B cell (primary cell): ENCODE measurements at regions of chr10 and their contacts with region 1.

Region 1: DNA sequence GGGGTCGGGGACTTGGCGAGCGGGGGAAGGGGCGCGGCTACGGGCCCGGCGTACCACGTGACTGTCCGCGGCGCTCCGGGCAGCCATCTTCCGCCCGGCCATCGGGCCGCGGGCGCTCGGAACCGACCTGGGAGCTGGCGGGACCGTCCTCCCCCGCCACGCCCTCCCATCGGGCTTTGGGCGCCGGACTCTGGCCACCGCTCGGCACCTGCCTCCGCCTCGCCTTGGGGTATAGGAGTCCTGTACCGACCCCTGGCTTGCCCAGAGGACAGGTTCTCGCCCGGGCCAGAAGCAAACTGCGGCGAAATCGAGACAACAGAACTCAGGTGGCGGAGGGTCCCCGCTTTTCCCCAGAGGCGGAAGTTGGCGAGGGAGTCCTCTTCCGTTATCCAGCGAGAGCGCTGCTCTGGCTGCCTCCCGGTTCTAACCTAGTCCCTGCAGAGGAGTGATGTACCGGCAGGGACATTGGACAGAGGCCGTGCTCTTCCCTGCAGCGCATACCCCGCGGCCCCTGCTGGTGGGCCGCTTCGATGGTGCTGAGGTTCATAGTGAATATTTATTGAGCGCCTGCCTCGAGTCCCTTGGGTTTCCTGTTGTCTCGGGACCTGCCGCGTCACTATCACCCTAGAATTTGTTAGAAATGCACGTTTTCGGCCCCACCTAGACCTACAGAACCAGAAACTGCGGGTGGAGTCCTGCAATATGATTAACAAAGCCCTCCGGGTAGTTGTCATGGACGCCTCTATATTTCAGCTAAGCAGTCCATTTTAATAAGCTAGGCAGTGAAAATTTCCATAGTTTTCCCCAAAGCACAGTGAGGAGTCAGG is 1.3 kb upstream of the SGMS1 start:
- DNase-seq: peak; percentile 90
- ATAC-seq: peak; percentile 44
- H3K4me3 ChIP-seq: peak overlapping the region; percentile 86 to 98 (median 96)
- H3K4me3 Mint-ChIP-seq: peak overlapping the region; percentile 98
- H3K27ac ChIP-seq: peak overlapping the region; percentile 99 to 100
- H3K27ac Mint-ChIP-seq: peak overlapping the region; percentile 99
- H3K4me1 ChIP-seq: peaks cover 19 to 23% of the 10 kb centered on the region in 2 donors
- H3K4me1 Mint-ChIP-seq: peaks cover 26% of the 10 kb centered on the region
- H3K27me3 ChIP-seq: no peaks in the 10 kb centered on the region
- H3K27me3 Mint-ChIP-seq: no peaks in the 10 kb centered on the region
- CTCF ChIP-seq: peak; percentile 70

Region 2: DNA sequence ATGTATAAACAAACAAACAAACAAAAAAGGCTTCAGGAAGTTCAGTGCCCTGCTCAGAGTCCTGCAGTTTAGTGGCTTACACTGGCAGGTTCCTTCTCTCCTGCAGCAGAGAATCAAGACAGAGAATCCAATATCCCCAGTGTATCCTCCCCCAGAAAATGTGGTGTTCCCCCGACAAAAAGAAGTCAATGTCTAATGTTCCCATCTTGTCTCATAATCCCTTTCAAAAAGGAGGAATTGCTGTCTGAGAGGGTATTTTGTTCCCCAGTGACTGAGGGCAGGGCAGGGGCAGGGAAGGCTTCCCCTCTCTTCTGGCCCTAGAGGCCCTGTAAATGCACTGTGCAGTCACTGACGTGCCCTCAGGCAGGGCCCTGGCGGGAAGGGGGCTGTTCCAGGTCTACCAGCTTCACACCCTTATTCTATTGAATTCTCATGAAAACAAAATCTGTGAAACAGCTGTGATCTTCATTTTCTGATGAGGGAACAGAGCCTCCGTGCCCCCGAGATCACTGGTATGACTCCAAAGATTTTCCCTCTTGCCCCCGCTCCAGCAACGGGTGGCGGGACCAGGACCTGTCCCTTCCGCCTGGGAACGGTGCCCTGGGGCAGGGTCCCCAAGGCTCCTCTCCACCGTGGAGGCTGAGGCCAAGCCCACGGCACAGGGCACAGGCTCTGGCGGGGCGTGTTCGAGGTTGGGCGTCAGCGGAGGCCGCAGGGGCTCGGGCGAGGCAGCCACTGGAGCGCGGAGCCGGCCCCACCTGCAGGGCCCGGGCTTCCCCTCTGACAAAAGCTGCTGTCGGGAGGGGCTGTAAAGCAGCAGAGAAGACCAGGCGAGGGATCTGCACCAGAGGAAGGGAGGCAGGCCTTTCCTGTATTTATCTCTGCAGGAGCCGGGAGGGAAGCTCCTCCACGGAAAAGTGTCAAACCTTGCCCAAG is 1953.8 kb before region 1 on chr10:
- CTCF ChIA-PET with region 1: no interaction called
- POLR2A ChIA-PET with region 1: no interaction called
- intact Hi-C with region 1: loop called (anchors 5 kb)
- DNase-seq: peak; percentile 95
- ATAC-seq: peak; percentile 70
- H3K4me3 ChIP-seq: peak overlapping the region in 4 of 5 experiments; percentile 13 to 61 (median 38)
- H3K4me3 Mint-ChIP-seq: peak overlapping the region; percentile 91
- H3K27ac ChIP-seq: peak overlapping the region; percentile 99 to 100
- H3K27ac Mint-ChIP-seq: peak overlapping the region; percentile 97
- H3K4me1 ChIP-seq: peaks cover 70 to 75% of the 10 kb centered on the region in 2 donors
- H3K4me1 Mint-ChIP-seq: peaks cover 66% of the 10 kb centered on the region
- H3K27me3 ChIP-seq: no peaks in the 10 kb centered on the region
- H3K27me3 Mint-ChIP-seq: no peaks in the 10 kb centered on the region
- CTCF ChIP-seq: no peak

Region 3: GRCh38 chr10:50275650-50276235 is 349.3 kb before region 1 on chr10:
- CTCF ChIA-PET with region 1: interaction called, 5 read pairs
- POLR2A ChIA-PET with region 1: no interaction called
- intact Hi-C with region 1: loop called (anchors 10 kb)
- DNase-seq: peak; percentile 58
- ATAC-seq: peak; percentile 39
- H3K4me3 ChIP-seq: no peak overlapping the region
- H3K4me3 Mint-ChIP-seq: no peak overlapping the region
- H3K27ac ChIP-seq: no peak overlapping the region
- H3K27ac Mint-ChIP-seq: no peak overlapping the region
- H3K4me1 ChIP-seq: no peaks in the 10 kb centered on the region
- H3K4me1 Mint-ChIP-seq: no peaks in the 10 kb centered on the region
- H3K27me3 ChIP-seq: peaks cover 0 to 12% (median 7%) of the 10 kb centered on the region in 4 experiments
- H3K27me3 Mint-ChIP-seq: peaks cover 32% of the 10 kb centered on the region
- CTCF ChIP-seq: peak; percentile 71

Region 4: GRCh38 chr10:50417886-50418830 is 206.9 kb before region 1 on chr10:
- CTCF ChIA-PET with region 1: interaction called, 3 read pairs
- POLR2A ChIA-PET with region 1: interaction called, 3 read pairs
- intact Hi-C with region 1: loop called (anchors 2 kb)
- DNase-seq: peak; percentile 55
- ATAC-seq: peak; percentile 77
- H3K4me3 ChIP-seq: peak overlapping the region; percentile 55 to 78 (median 71)
- H3K4me3 Mint-ChIP-seq: peak overlapping the region; percentile 93
- H3K27ac ChIP-seq: peak overlapping the region in 1 of 2 donors; percentile 8
- H3K27ac Mint-ChIP-seq: peak overlapping the region; percentile 79
- H3K4me1 ChIP-seq: peaks cover 17 to 26% of the 10 kb centered on the region in 2 donors
- H3K4me1 Mint-ChIP-seq: peaks cover 57% of the 10 kb centered on the region
- H3K27me3 ChIP-seq: no peaks in the 10 kb centered on the region
- H3K27me3 Mint-ChIP-seq: no peaks in the 10 kb centered on the region
- CTCF ChIP-seq: no peak

Region 5: GRCh38 chr10:50561816-50562215 is 63.3 kb before region 1 on chr10:
- CTCF ChIA-PET with region 1: interaction called, 21 read pairs
- POLR2A ChIA-PET with region 1: interaction called, 3 read pairs
- intact Hi-C with region 1: loop called (anchors 1 kb)
- DNase-seq: peak; percentile 24
- ATAC-seq: peak; percentile 31
- H3K4me3 ChIP-seq: no peak overlapping the region
- H3K4me3 Mint-ChIP-seq: no peak overlapping the region
- H3K27ac ChIP-seq: no peak overlapping the region
- H3K27ac Mint-ChIP-seq: no peak overlapping the region
- H3K4me1 ChIP-seq: no peaks in the 10 kb centered on the region
- H3K4me1 Mint-ChIP-seq: peaks cover 19% of the 10 kb centered on the region
- H3K27me3 ChIP-seq: no peaks in the 10 kb centered on the region
- H3K27me3 Mint-ChIP-seq: no peaks in the 10 kb centered on the region
- CTCF ChIP-seq: peak; percentile 43

Region 6: GRCh38 chr10:51699475-51700227 is 1074.6 kb after region 1 on chr10 and contains the start of gene CSTF2T:
- CTCF ChIA-PET with region 1: no interaction called
- POLR2A ChIA-PET with region 1: no interaction called
- intact Hi-C with region 1: loop called (anchors 5 kb)
- DNase-seq: peak; percentile 98
- ATAC-seq: peak; percentile 94
- H3K4me3 ChIP-seq: peak within 1 kb of the TSS; percentile 85 to 99 (median 97)
- H3K4me3 Mint-ChIP-seq: peak within 1 kb of the TSS; percentile 99
- H3K27ac ChIP-seq: peak within 1 kb of the TSS; percentile 95 to 96
- H3K27ac Mint-ChIP-seq: peak within 1 kb of the TSS; percentile 100
- H3K4me1 ChIP-seq: peaks cover 22 to 28% of the 10 kb centered on the region in 2 donors
- H3K4me1 Mint-ChIP-seq: peaks cover 47% of the 10 kb centered on the region
- H3K27me3 ChIP-seq: peaks cover 0 to 3% (median 0%) of the 10 kb centered on the region in 4 experiments
- H3K27me3 Mint-ChIP-seq: peaks cover 4% of the 10 kb centered on the region
- CTCF ChIP-seq: no peak
- total RNA-seq, gene CSTF2T: 36.4 and 36.7 TPM in 2 replicates